Calu3 (cell line): ENCODE measurements at regions of chr10 and their contacts with region 1.

Region 1: DNA sequence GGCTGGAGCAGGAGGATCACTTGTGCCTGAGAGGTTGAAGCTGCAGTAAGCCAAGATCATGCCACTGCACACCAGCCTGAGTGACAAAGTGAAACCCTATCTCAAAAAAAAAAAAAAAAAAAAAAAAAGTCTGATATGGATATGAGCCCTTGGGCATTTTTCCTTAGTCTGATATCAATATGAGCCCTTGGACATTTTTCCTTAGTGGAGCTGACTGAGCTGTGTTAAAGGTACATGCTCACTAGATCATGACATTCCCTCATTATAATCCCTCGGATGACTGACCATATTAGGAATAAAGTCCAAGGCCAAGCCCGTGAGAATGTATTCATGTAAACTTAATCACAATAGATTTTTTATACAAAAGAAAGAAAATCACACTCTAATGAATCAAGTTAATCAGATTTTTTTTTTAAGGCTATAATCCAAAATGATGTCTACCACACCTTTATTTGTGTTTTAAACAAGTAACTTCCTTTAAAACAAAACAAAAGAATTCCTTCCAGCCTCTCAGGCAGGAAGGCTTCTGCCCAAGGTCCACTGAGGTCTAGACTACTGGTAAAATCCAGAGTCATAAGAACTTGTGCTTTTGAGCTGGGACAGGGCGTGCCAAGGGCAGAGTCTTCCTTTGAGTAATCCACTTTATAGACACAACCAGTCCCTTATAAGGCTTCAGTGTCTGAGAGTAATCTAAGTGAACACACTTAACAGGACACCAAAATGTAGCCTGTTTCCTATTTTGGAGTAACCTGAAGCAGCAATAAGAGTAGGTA is 5.5 kb downstream of the PPA1 start:
- DNase-seq: peak; percentile 23
- H3K4me3 Mint-ChIP-seq: no peak overlapping the region
- H3K27ac Mint-ChIP-seq: no peak overlapping the region
- H3K4me1 Mint-ChIP-seq: peaks cover 40% of the 10 kb centered on the region
- H3K27me3 Mint-ChIP-seq: no peaks in the 10 kb centered on the region
- CTCF ChIP-seq: no peak

Region 2: GRCh38 chr10:70348228-70348850 is 120.6 kb after region 1 on chr10:
- CTCF ChIA-PET with region 1: interaction called, 3 read pairs
- intact Hi-C with region 1: loop called (anchors 1 kb)
- DNase-seq: peak; percentile 60
- H3K4me3 Mint-ChIP-seq: no peak overlapping the region
- H3K27ac Mint-ChIP-seq: no peak overlapping the region
- H3K4me1 Mint-ChIP-seq: peaks cover 10% of the 10 kb centered on the region
- H3K27me3 Mint-ChIP-seq: no peaks in the 10 kb centered on the region
- CTCF ChIP-seq: no peak

Region 3: DNA sequence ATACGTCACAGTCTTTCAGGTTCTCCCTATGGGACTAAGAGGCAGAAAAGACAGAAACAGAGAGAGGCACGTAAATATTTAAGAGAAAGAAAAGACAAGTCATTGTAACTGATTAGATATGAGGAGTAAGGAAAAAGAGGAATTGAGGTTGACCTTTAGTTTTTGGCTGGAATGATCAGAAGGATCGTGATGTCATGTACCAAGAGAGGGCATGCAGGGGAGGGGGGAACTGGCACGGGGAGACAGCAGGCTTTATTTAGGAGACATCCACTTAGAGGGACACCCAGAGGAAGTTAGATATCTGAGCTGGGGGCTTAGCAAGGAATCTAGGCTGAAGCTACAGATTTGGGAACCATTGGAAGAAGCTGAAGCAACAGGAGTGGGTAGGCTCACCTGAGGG is 163.9 kb after region 1 on chr10:
- CTCF ChIA-PET with region 1: interaction called, 59 read pairs
- intact Hi-C with region 1: loop called (anchors 1 kb)
- DNase-seq: no peak
- H3K4me3 Mint-ChIP-seq: no peak overlapping the region
- H3K27ac Mint-ChIP-seq: no peak overlapping the region
- H3K4me1 Mint-ChIP-seq: peaks cover 22% of the 10 kb centered on the region
- H3K27me3 Mint-ChIP-seq: peaks cover 29% of the 10 kb centered on the region
- CTCF ChIP-seq: no peak